Dorsolateral prefrontal cortex (tissue), 120 donors: ENCODE measurements at regions of chr10 and their contacts with region 1.

Region 1: DNA sequence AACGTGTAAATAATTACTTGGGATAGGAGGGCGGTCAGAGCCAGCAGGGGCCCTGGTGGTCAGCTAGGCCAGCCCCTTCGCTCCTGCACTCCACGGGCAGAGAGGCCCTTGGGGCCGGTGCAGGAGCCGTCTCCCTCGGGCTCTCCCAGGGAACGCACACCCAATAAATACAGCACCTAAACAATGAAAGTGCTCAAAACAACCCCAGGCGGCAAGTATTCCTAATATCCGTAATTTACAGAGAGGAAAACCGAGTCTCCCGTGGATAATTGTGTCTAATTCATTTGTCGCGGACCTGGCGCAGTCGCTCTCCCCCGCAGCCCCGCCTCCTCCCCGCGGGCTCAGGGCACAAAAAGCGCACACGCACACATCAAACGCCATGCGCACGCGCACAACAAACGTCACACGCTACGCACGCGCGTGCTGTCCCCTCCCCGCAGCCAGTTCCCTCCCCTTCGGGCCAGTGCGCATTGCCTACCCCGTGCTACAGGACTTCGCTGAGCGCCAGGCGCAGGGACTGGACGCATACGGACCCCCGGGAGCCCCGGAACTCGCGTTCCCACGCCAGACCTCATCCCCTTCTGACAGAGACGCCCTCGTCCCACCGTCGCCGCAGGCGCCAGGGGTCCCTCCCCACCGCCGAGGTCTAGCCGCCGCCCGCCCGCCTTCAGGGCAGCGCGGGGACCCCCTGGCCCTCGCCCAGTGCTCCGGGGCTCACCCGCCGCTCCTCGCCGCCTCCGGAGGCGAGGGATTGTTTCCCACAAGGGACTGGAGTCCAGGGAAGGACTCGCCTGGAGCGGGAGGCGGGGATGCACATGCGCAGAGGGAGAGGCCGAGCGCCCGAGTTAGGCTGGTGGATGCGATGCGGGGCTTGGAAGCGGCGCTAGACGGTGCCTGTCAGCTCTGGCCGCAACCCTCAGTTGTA is at the start of gene ZNF248:
- DNase-seq: peak; percentile 92 to 97 (median 96)
- H3K4me3 ChIP-seq: peak within 1 kb of the TSS; percentile 67 to 100 (median 93)
- H3K27ac ChIP-seq: peak within 1 kb of the TSS; percentile 97 to 100 (median 100)
- H3K27me3 ChIP-seq: no peaks in the 10 kb centered on the region
- CTCF ChIP-seq: peak in 25 of 56 donors; percentile 2 to 40 (median 17)
- total RNA-seq, gene ZNF248: 30.3 to 61.8 (median 43.0) TPM

Region 2: GRCh38 chr10:37976091-37976879 is 118.7 kb after region 1 on chr10 and contains the start of gene ZNF25:
- intact Hi-C with region 1: loop called (anchors 1 kb)
- DNase-seq: peak; percentile 95 to 99 (median 98)
- H3K4me3 ChIP-seq: peak within 1 kb of the TSS; percentile 57 to 99 (median 90)
- H3K27ac ChIP-seq: peak within 1 kb of the TSS; percentile 88 to 100 (median 98)
- H3K27me3 ChIP-seq: no peaks in the 10 kb centered on the region
- CTCF ChIP-seq: peak; percentile 61 to 95 (median 84)
- total RNA-seq, gene ZNF25: 32.1 to 95.5 (median 61.2) TPM

Region 3: GRCh38 chr10:38038107-38038931 is 180.8 kb after region 1 on chr10:
- intact Hi-C with region 1: no loop called
- DNase-seq: no peak
- H3K4me3 ChIP-seq: peak overlapping the region in 6 of 59 donors; percentile 4 to 24 (median 17)
- H3K27ac ChIP-seq: peak overlapping the region in 1 of 59 donors; percentile 27
- H3K27me3 ChIP-seq: no peaks in the 10 kb centered on the region
- CTCF ChIP-seq: no peak

Region 4: DNA sequence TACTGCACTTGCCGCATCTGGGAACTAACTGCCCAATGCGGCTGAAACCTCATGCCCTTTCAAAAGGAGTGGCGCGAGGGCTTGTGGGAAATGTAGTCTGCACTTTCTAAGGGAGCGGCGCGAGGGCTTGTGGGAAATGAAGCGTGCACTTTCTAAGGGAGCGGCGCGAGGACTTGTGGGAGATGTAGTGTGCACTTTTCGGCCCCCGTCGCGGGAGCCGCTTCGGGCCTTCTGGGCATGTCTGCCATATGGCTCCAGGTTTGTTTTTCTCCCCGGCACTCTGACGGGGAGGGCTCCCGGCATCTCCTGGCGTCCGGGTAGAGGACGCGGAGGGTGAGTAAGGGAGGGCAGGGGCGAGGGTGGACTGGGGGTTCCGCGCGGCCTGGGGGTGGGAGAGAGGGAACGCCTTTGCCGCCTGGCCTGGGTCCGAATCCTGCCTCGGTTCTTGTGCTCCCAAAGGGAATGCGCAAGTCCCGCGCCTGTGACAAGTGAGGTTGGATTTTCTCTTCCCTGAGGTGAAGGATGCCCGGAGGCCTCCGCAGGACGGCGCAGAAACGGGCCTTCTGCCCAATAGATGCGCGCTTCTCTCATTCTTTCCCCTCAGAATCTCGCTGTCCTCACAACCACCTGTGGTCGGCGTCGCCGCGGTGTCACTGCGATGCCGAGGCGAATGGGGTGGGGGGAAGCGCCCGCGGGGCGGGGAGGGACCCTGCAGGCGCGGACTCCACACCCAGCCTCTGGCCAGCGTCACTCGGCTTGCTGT is 236.8 kb after region 1 on chr10 and contains the start of gene ZNF37A:
- intact Hi-C with region 1: loop called (anchors 2 to 5 kb)
- DNase-seq: peak; percentile 91 to 98 (median 94)
- H3K4me3 ChIP-seq: peak within 1 kb of the TSS; percentile 60 to 99 (median 92)
- H3K27ac ChIP-seq: peak within 1 kb of the TSS; percentile 13 to 96 (median 87)
- H3K27me3 ChIP-seq: no peaks in the 10 kb centered on the region
- CTCF ChIP-seq: peak in 39 of 56 donors; percentile 2 to 62 (median 37)
- total RNA-seq, gene ZNF37A: 24.5 to 48.8 (median 36.0) TPM